MCF 10A (cell line): ENCODE measurements at regions of chr18 and their contacts with region 1.

Region 1: DNA sequence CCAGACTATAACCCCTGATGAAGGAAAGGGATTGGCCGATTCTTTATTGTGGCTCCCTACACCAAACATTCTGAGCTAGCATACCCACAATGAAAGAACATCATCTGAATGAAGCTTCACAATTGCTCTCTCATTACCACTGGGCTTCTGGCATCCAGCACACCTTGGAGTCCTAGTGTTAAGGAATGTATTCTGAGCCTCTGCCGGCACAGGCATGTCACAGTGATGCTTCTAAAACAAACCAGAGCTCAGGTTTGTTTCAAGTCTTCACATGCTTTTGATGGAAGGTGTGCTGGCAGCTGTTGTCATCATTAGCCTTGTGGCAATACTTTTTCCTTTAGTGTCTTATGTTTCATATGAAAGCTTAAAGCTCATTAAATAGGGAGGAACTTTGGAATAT is 76.3 kb upstream of the RBBP8 start:
- DNase-seq: peak; percentile 67
- H3K4me3 Mint-ChIP-seq: no peak overlapping the region
- H3K27ac Mint-ChIP-seq: peak overlapping the region; percentile 79
- H3K4me1 Mint-ChIP-seq: peaks cover 10% of the 10 kb centered on the region
- H3K27me3 Mint-ChIP-seq: no peaks in the 10 kb centered on the region
- CTCF ChIP-seq: no peak

Region 2: DNA sequence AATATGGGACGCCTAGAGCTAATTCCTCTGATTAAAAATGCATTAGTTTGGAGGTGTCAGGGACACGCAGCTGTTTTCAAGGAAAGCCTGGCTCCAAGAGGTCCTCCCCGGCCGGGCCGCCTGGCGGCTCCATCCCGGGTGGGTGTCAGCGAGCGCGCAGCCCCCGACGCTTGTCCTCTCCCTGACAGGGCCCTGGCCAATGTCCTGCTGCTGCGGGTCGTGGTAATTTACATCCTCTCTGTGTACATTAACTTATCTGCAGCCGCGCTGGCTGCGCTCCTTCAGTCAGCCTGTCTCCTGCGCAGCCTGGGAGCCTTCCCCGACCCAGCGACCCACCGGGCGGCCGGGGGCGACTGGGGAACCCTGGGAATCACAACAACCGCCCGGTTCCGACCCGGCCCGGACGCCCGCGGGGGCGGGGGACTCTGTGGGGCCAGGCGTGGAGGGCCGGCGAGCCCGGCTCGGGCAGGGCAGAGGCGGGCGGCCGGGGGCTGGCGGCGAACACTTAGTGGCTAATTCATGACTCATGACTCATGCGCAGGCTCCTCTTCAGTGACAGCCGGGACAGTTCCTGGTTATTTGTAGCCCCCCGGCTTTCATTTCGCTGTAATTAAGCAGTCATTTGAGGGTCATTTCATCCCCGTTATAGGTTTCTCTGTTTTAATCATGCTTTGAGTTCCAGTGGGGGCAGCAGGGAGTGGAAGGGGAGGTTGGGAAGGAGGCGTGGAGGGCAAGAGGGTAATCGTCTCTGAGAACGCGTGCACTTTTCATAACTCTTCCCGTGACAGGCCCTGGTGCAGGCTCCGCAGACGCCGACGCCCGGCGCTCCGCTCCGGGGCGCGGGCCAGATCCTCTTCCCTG is 297.2 kb before region 1 on chr18:
- CTCF ChIA-PET with region 1: no interaction called
- POLR2A ChIA-PET with region 1: no interaction called
- intact Hi-C with region 1: no loop called
- DNase-seq: no peak
- H3K4me3 Mint-ChIP-seq: peak overlapping the region; percentile 65
- H3K27ac Mint-ChIP-seq: no peak overlapping the region
- H3K4me1 Mint-ChIP-seq: peaks cover 22% of the 10 kb centered on the region
- H3K27me3 Mint-ChIP-seq: no peaks in the 10 kb centered on the region
- CTCF ChIP-seq: no peak

Region 3: GRCh38 chr18:22831441-22831904 is 25.4 kb before region 1 on chr18:
- CTCF ChIA-PET with region 1: no interaction called
- POLR2A ChIA-PET with region 1: interaction called, 21 read pairs
- intact Hi-C with region 1: no loop called
- DNase-seq: peak; percentile 97
- H3K4me3 Mint-ChIP-seq: no peak overlapping the region
- H3K27ac Mint-ChIP-seq: no peak overlapping the region
- H3K4me1 Mint-ChIP-seq: peaks cover 30% of the 10 kb centered on the region
- H3K27me3 Mint-ChIP-seq: no peaks in the 10 kb centered on the region
- CTCF ChIP-seq: no peak